Activated T-helper 2 cell treated with anti-CD3 and anti-CD28 coated beads, Interferon-gamma antibody, Interleukin-2, Interleukin-4, amounts not matched to agents 10 μg/mL and 5 μg/mL and 100 μg/mL, durations not matched to agents 14 hours and 24 hours and 36 hours (primary cell): ENCODE measurements at regions of chr12 and their contacts with region 1.

Region 1: DNA sequence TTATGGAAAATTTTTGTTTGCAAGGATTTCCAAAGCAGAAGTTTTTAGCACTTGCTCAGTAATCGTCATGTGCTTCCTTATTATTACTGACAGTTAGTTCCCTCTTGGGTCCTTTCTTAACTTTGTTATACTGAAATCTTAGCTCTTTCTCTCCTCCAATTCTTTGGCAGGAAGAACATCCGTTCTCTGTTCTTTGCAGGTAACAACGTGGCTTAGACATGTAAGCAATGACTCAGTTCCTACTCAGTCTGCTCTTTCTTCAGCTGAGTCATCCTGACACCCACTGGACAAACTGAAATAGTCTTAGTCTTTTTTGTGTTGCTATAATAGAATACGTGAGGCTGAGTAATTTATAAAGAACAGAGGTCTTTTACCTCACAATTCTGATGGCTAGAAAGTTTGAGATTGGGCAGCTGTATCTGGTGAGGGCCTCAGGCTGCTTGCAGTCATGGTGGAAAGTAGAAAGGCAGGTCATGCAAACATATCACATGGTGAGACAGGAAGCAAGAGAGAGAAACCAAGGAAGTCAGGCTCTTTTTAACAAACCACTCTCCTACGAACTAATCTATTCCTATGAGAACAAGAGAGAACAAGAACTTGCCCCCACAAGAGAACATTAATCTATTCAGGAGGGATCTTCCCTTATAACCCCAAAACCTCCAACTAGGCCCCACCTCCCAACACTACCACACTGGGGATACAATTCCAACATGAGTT is 49.2 kb downstream of the TESPA1 start:
- DNase-seq: peak; percentile 25
- H3K4me3 Mint-ChIP-seq: peak overlapping the region; percentile 66
- H3K27ac Mint-ChIP-seq: peak overlapping the region; percentile 99
- H3K4me1 Mint-ChIP-seq: peaks cover 51% of the 10 kb centered on the region
- H3K27me3 Mint-ChIP-seq: no peaks in the 10 kb centered on the region

Region 2: DNA sequence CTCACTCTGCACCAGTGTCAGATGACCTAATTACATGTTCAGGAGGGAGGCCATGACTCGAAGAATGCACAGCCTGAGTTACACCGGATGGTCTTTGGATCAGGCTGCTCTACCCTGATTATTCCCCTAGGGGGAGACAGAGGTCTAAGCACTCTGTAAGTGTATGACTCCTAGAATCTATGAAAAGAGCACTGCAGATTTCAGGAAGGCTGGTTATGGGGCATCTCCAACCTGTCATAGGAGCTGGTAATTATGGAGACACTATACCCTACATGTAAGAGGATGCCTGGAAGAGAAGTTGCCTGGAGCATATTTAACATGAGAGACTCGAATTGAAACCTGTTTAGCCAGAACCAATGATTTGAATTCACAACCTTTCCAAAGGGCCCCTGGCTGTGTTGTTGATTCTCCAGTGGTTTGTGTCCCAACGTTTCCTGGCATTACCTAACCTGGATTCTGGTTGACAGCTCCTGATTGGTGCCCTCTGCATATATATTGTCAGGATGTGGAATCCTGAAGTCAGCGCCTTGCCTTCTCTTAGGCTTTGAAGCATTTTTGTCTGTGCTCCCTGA is 81.3 kb before region 1 on chr12 and contains the start of gene MUCL1:
- intact Hi-C with region 1: loop called (anchors 1 kb)
- DNase-seq: peak; percentile 55
- H3K4me3 Mint-ChIP-seq: no peak within 1 kb of the TSS
- H3K27ac Mint-ChIP-seq: no peak within 1 kb of the TSS
- H3K4me1 Mint-ChIP-seq: peaks cover 30% of the 10 kb centered on the region
- H3K27me3 Mint-ChIP-seq: peaks cover 5% of the 10 kb centered on the region
- total RNA-seq, gene MUCL1: 0.51 TPM in 1 of 2 replicates, not detected in the other

Region 3: DNA sequence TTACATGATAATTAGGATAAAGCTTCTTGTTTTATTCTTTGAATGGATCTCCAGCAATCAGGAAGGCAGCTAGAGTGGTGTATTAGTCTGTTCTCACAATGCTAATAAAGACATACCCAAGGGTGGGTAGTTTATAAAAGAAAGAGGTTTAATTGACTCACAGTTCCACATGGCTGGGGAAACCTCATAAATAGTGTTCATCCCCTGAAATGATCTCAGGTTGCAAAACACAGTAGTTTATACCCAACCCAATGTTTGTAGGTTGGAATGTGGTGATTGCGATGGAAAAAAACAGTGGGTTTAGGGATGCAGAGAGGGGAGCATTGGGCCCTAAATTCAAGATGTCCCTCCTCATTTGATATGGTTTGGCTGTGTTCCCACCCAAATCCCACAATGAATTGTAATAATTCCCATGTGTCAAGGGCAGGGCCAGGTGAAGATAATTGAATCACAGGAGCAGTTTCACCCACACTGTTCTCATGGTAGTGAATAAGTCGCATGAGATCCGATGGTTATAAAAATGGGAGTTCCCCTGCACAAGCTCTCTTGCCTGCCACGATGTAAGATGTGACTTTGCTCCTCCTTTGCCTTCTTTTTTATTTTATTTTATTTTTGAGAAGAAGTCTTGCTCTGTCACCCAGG is 69.6 kb before region 1 on chr12:
- intact Hi-C with region 1: loop called (anchors 2 kb)
- DNase-seq: no peak
- H3K4me3 Mint-ChIP-seq: no peak overlapping the region
- H3K27ac Mint-ChIP-seq: no peak overlapping the region
- H3K4me1 Mint-ChIP-seq: peaks cover 13% of the 10 kb centered on the region
- H3K27me3 Mint-ChIP-seq: peaks cover 43% of the 10 kb centered on the region

Region 4: GRCh38 chr12:54924972-54925707 is 10.3 kb before region 1 on chr12:
- intact Hi-C with region 1: no loop called
- DNase-seq: no peak
- H3K4me3 Mint-ChIP-seq: no peak overlapping the region
- H3K27ac Mint-ChIP-seq: no peak overlapping the region
- H3K4me1 Mint-ChIP-seq: no peaks in the 10 kb centered on the region
- H3K27me3 Mint-ChIP-seq: no peaks in the 10 kb centered on the region

Region 5: GRCh38 chr12:54958048-54958658 is 22.8 kb after region 1 on chr12:
- intact Hi-C with region 1: loop called (anchors 1 kb)
- DNase-seq: no peak
- H3K4me3 Mint-ChIP-seq: peak overlapping the region; percentile 46
- H3K27ac Mint-ChIP-seq: peak overlapping the region; percentile 86
- H3K4me1 Mint-ChIP-seq: peaks cover 80% of the 10 kb centered on the region
- H3K27me3 Mint-ChIP-seq: no peaks in the 10 kb centered on the region

Region 6: GRCh38 chr12:54984658-54985376 is 49.4 kb after region 1 on chr12 and contains the start of gene TESPA1:
- intact Hi-C with region 1: loop called (anchors 1 kb)
- DNase-seq: peak; percentile 82
- H3K4me3 Mint-ChIP-seq: peak within 1 kb of the TSS; percentile 92
- H3K27ac Mint-ChIP-seq: peak within 1 kb of the TSS; percentile 89
- H3K4me1 Mint-ChIP-seq: peaks cover 59% of the 10 kb centered on the region
- H3K27me3 Mint-ChIP-seq: no peaks in the 10 kb centered on the region
- total RNA-seq, gene TESPA1: 179 and 186 TPM in 2 replicates

Region 7: GRCh38 chr12:55610598-55610997 is 675.2 kb after region 1 on chr12:
- intact Hi-C with region 1: loop called (anchors 5 kb)
- DNase-seq: no peak
- H3K4me3 Mint-ChIP-seq: no peak overlapping the region
- H3K27ac Mint-ChIP-seq: peak overlapping the region; percentile 36
- H3K4me1 Mint-ChIP-seq: peaks cover 24% of the 10 kb centered on the region
- H3K27me3 Mint-ChIP-seq: peaks cover 10% of the 10 kb centered on the region